CD8-positive, alpha-beta T cell (primary cell): ENCODE measurements at regions of chr14 and their contacts with region 1.

Region 1: GRCh38 chr14:74018586-74019407 is at the starts of genes BBOF1 and ENTPD5:
- DNase-seq: peak; percentile 69 to 95 (median 86)
- ATAC-seq: peak; percentile 93
- H3K4me3 ChIP-seq: peak within 1 kb of the TSS; percentile 82 to 93
- H3K4me3 Mint-ChIP-seq: peak within 1 kb of the TSS; percentile 91
- H3K27ac ChIP-seq: peak within 1 kb of the TSS; percentile 86 to 94
- H3K27ac Mint-ChIP-seq: peak within 1 kb of the TSS; percentile 97
- H3K4me1 ChIP-seq: peaks cover 12% of the 10 kb centered on the region
- H3K4me1 Mint-ChIP-seq: peaks cover 16% of the 10 kb centered on the region
- H3K27me3 ChIP-seq: no peaks in the 10 kb centered on the region
- H3K27me3 Mint-ChIP-seq: no peaks in the 10 kb centered on the region
- CTCF ChIP-seq: no peak
- total RNA-seq, gene BBOF1: 2.4 to 2.9 TPM
- total RNA-seq, gene ENTPD5: 8.0 to 9.0 TPM

Region 2: GRCh38 chr14:73136387-73137225 is 882.2 kb before region 1 on chr14 and contains the start of gene PSEN1:
- CTCF ChIA-PET with region 1: no interaction called
- POLR2A ChIA-PET with region 1: no interaction called
- intact Hi-C with region 1: loop called in 1 of 2 experiments (anchors 5 kb)
- DNase-seq: peak; percentile 98 to 100 (median 99)
- ATAC-seq: peak; percentile 96
- H3K4me3 ChIP-seq: peak within 1 kb of the TSS; percentile 84 to 92
- H3K4me3 Mint-ChIP-seq: peak within 1 kb of the TSS; percentile 97
- H3K27ac ChIP-seq: peak within 1 kb of the TSS; percentile 91 to 93
- H3K27ac Mint-ChIP-seq: peak within 1 kb of the TSS; percentile 99
- H3K4me1 ChIP-seq: peaks cover 17% of the 10 kb centered on the region
- H3K4me1 Mint-ChIP-seq: peaks cover 31% of the 10 kb centered on the region
- H3K27me3 ChIP-seq: no peaks in the 10 kb centered on the region
- H3K27me3 Mint-ChIP-seq: no peaks in the 10 kb centered on the region
- CTCF ChIP-seq: no peak
- total RNA-seq, gene PSEN1: 24.2 to 24.4 TPM

Region 3: DNA sequence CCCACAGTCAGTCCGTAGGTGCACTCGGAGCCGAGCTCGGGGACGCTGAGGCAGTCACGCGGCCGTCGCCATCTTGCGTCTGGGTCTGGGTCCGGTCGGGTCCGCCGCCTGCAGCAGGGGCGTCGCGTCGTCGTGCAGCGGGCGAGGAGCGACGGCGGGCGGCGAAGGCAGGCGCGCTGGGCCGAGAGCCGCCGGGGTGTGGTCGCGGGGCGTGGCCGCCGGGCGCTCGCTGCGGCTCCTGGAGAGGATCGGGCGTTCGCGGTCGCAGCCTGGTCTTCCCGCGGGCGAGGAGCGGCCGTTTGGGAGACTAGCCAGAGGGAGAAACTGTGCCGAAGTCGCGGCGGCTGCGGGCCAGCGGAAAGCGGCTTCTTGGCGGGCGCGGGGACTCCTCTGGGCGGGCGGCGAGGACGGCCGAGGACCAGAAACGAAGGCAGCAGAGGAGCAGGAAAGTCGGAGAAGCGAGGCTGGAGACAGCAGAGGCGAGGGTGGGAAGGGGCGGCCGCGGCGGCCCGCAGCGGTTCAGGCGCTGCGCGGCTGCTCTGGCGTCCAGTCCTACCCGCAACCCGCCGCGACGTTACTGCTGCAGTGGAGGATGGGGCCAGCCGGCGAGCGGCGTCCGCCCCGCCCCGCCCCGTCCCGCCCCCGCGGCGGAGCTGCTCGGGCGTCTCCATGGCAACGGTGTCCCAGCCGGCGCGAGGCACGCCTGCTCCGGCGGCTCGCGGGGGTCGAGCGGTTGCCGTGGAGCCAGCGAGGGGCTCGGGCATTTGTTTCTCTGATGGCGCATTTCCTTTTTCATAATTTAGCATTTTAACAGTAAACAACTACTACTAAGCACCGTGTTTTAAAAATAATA is 304.8 kb before region 1 on chr14 and contains the start of gene PNMA1:
- CTCF ChIA-PET with region 1: no interaction called
- POLR2A ChIA-PET with region 1: no interaction called
- intact Hi-C with region 1: loop called in 1 of 2 experiments (anchors 1 kb)
- DNase-seq: peak; percentile 67 to 94 (median 87)
- ATAC-seq: peak; percentile 72
- H3K4me3 ChIP-seq: peak within 1 kb of the TSS; percentile 71 to 92
- H3K4me3 Mint-ChIP-seq: peak within 1 kb of the TSS; percentile 92
- H3K27ac ChIP-seq: peak within 1 kb of the TSS; percentile 76 to 77
- H3K27ac Mint-ChIP-seq: peak within 1 kb of the TSS; percentile 96
- H3K4me1 ChIP-seq: peaks cover 10% of the 10 kb centered on the region
- H3K4me1 Mint-ChIP-seq: peaks cover 34% of the 10 kb centered on the region
- H3K27me3 ChIP-seq: no peaks in the 10 kb centered on the region
- H3K27me3 Mint-ChIP-seq: no peaks in the 10 kb centered on the region
- CTCF ChIP-seq: no peak
- total RNA-seq, gene PNMA1: 39.4 to 39.8 TPM

Region 4: GRCh38 chr14:73825551-73826188 is 193.1 kb before region 1 on chr14:
- CTCF ChIA-PET with region 1: no interaction called
- POLR2A ChIA-PET with region 1: no interaction called
- intact Hi-C with region 1: no loop called
- DNase-seq: peak; percentile 48 to 86 (median 81)
- ATAC-seq: peak; percentile 97
- H3K4me3 ChIP-seq: no peak overlapping the region
- H3K4me3 Mint-ChIP-seq: no peak overlapping the region
- H3K27ac ChIP-seq: no peak overlapping the region
- H3K27ac Mint-ChIP-seq: no peak overlapping the region
- H3K4me1 ChIP-seq: no peaks in the 10 kb centered on the region
- H3K4me1 Mint-ChIP-seq: peaks cover 10% of the 10 kb centered on the region
- H3K27me3 ChIP-seq: no peaks in the 10 kb centered on the region
- H3K27me3 Mint-ChIP-seq: no peaks in the 10 kb centered on the region
- CTCF ChIP-seq: peak; percentile 86

Region 5: DNA sequence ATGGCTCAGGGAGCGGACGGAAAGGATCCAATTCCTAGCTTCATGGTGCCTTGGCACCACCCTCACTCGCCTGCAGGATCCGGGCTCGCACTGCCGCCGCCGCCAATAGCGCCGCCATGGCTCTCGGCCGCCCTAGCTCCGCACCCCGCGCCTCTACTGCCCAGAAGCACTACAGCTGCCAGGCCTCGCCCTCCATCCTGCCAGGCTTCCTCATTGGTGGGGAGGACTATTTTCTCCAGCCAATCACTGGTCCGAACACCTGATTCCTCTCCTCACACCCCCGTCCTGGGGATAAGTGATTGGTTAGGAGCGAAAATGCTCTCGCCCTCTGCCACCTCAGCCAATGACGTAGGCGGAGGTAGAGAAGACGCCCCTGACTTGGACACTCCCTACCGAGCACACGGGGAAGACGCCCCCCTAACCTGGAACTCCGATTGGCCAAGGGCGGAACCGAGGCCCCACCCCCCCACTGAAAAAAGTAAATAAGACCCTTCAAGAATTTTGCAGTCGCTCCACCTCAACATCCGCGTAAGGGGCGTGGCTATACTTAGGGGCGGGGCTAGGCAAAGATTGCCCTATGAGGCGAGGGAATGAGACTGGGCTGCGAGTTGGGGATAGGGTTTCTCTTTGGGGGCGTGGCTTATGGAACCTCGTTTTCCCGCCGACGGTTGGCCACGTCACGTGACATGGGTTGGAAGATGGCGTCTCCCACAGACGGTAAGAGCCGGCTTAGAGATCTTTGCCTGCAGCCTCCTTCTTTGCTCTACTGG is 65.7 kb after region 1 on chr14 and contains the starts of genes ALDH6A1 and LIN52:
- CTCF ChIA-PET with region 1: no interaction called
- POLR2A ChIA-PET with region 1: interaction called, 3 read pairs
- intact Hi-C with region 1: loop called (anchors 1 kb)
- DNase-seq: peak; percentile 100
- ATAC-seq: peak; percentile 85
- H3K4me3 ChIP-seq: peak within 1 kb of the TSS; percentile 80 to 90
- H3K4me3 Mint-ChIP-seq: peak within 1 kb of the TSS; percentile 98
- H3K27ac ChIP-seq: peak within 1 kb of the TSS; percentile 70 to 73
- H3K27ac Mint-ChIP-seq: peak within 1 kb of the TSS; percentile 96
- H3K4me1 ChIP-seq: peaks cover 19% of the 10 kb centered on the region
- H3K4me1 Mint-ChIP-seq: peaks cover 33% of the 10 kb centered on the region
- H3K27me3 ChIP-seq: no peaks in the 10 kb centered on the region
- H3K27me3 Mint-ChIP-seq: no peaks in the 10 kb centered on the region
- CTCF ChIP-seq: no peak
- total RNA-seq, gene ALDH6A1: 3.8 to 4.0 TPM
- total RNA-seq, gene LIN52: 6.1 to 6.8 TPM

Region 6: GRCh38 chr14:74712499-74713394 is 694.0 kb after region 1 on chr14 and contains the starts of genes AREL1 and FCF1:
- CTCF ChIA-PET with region 1: no interaction called
- POLR2A ChIA-PET with region 1: no interaction called
- intact Hi-C with region 1: loop called in 1 of 2 experiments (anchors 5 kb)
- DNase-seq: peak; percentile 56 to 94 (median 80)
- ATAC-seq: peak; percentile 93
- H3K4me3 ChIP-seq: peak within 1 kb of the TSS; percentile 63 to 87
- H3K4me3 Mint-ChIP-seq: peak within 1 kb of the TSS; percentile 98
- H3K27ac ChIP-seq: peak within 1 kb of the TSS; percentile 78 to 93
- H3K27ac Mint-ChIP-seq: peak within 1 kb of the TSS; percentile 99
- H3K4me1 ChIP-seq: peaks cover 24% of the 10 kb centered on the region
- H3K4me1 Mint-ChIP-seq: peaks cover 65% of the 10 kb centered on the region
- H3K27me3 ChIP-seq: no peaks in the 10 kb centered on the region
- H3K27me3 Mint-ChIP-seq: no peaks in the 10 kb centered on the region
- CTCF ChIP-seq: no peak
- total RNA-seq, gene AREL1: 44.5 to 60.1 TPM
- total RNA-seq, gene FCF1: 32.6 to 34.0 TPM